ENCODE measurements at regions of chr6 and their contacts with region 1.

Region 1: DNA sequence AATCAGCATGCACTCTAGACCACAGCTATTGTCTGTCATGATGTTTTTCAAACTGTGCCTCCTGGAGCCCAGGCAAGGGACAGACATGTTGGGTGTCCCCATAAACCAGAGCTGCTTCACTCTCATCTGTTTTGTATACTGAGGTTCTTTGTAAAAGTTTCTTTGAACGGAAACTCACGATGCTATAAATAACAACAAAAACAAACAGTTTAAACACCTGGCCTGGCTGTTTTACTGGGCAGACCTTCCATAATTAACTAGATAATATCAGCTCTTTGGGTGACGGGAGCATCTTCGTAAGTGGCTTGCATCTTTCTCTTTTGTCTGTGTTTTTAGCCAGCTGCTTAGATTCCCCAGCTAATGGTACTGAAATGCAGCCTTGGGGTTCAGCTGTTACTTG is 190.3 kb downstream of the ZDHHC14 start:
- DNase-seq: peak in 1 of 9 experiments; percentile 43
- ATAC-seq: no peak
- H3K4me3 ChIP-seq: no peak overlapping the region
- H3K4me3 Mint-ChIP-seq: no peak overlapping the region
- H3K27ac ChIP-seq: no peak overlapping the region
- H3K27ac Mint-ChIP-seq: no peak overlapping the region
- H3K4me1 ChIP-seq: peaks cover 15% of the 10 kb centered on the region
- H3K4me1 Mint-ChIP-seq: peaks cover 34% of the 10 kb centered on the region
- H3K27me3 ChIP-seq: no peaks in the 10 kb centered on the region
- H3K27me3 Mint-ChIP-seq: no peaks in the 10 kb centered on the region
- CTCF ChIP-seq: no peak

Region 2: GRCh38 chr6:157514659-157515496 is 56.4 kb before region 1 on chr6:
- CTCF ChIA-PET with region 1: no interaction called
- POLR2A ChIA-PET with region 1: no interaction called
- intact Hi-C with region 1: loop called in 1 of 2 experiments (anchors 10 kb)
- DNase-seq: peak in 1 of 9 experiments; percentile 27
- ATAC-seq: no peak
- H3K4me3 ChIP-seq: no peak overlapping the region
- H3K4me3 Mint-ChIP-seq: no peak overlapping the region
- H3K27ac ChIP-seq: no peak overlapping the region
- H3K27ac Mint-ChIP-seq: peak overlapping the region; percentile 45
- H3K4me1 ChIP-seq: peaks cover 5% of the 10 kb centered on the region
- H3K4me1 Mint-ChIP-seq: peaks cover 11% of the 10 kb centered on the region
- H3K27me3 ChIP-seq: no peaks in the 10 kb centered on the region
- H3K27me3 Mint-ChIP-seq: no peaks in the 10 kb centered on the region
- CTCF ChIP-seq: no peak

Region 3: GRCh38 chr6:157536223-157536545 is 35.1 kb before region 1 on chr6:
- CTCF ChIA-PET with region 1: no interaction called
- POLR2A ChIA-PET with region 1: no interaction called
- intact Hi-C with region 1: no loop called
- DNase-seq: no peak
- ATAC-seq: no peak
- H3K4me3 ChIP-seq: no peak overlapping the region
- H3K4me3 Mint-ChIP-seq: peak overlapping the region; percentile 42
- H3K27ac ChIP-seq: peak overlapping the region in 1 of 2 experiments; percentile 86
- H3K27ac Mint-ChIP-seq: peak overlapping the region; percentile 85
- H3K4me1 ChIP-seq: peaks cover 25% of the 10 kb centered on the region
- H3K4me1 Mint-ChIP-seq: peaks cover 56% of the 10 kb centered on the region
- H3K27me3 ChIP-seq: no peaks in the 10 kb centered on the region
- H3K27me3 Mint-ChIP-seq: no peaks in the 10 kb centered on the region
- CTCF ChIP-seq: no peak

Region 4: DNA sequence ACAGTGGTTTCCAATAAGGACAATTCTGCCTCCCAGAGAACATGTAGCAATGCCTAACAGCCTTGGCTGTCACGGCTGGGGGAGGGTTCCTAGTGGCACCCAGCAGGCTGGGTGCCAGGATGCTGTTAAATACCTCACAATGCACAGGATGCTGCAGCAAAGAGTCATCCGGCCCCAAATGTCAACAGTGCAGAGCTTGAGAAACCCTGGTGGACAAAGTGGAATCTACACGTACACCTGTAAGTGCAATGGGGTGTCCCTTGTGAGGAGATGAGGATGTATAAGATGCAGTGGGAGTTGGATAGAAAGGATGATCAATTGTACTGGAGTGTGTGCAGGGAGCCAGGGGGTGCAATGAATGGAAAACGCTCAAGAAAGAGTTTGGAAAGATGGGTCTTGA is 1740.3 kb after region 1 on chr6:
- CTCF ChIA-PET with region 1: no interaction called
- POLR2A ChIA-PET with region 1: no interaction called
- intact Hi-C with region 1: no loop called
- DNase-seq: no peak
- ATAC-seq: no peak
- H3K4me3 ChIP-seq: no peak overlapping the region
- H3K4me3 Mint-ChIP-seq: no peak overlapping the region
- H3K27ac ChIP-seq: no peak overlapping the region
- H3K27ac Mint-ChIP-seq: no peak overlapping the region
- H3K4me1 ChIP-seq: no peaks in the 10 kb centered on the region
- H3K4me1 Mint-ChIP-seq: no peaks in the 10 kb centered on the region
- H3K27me3 ChIP-seq: no peaks in the 10 kb centered on the region
- H3K27me3 Mint-ChIP-seq: peaks cover 7% of the 10 kb centered on the region
- CTCF ChIP-seq: no peak

Measured in CD8-positive, alpha-beta T cell (primary cell).